Left ventricle myocardium inferior (tissue), 1 donor: ENCODE measurements at regions of chr19 and their contacts with region 1.

Region 1: GRCh38 chr19:2475702-2476450 is at the start of gene GADD45B:
- DNase-seq: peak; percentile 98
- H3K4me3 ChIP-seq: peak within 1 kb of the TSS; percentile 98
- H3K27ac ChIP-seq: peak within 1 kb of the TSS; percentile 95
- H3K4me1 ChIP-seq: peaks cover 51% of the 10 kb centered on the region
- H3K27me3 ChIP-seq: no peaks in the 10 kb centered on the region
- CTCF ChIP-seq: no peak
- total RNA-seq, gene GADD45B: 34.3 TPM

Region 2: DNA sequence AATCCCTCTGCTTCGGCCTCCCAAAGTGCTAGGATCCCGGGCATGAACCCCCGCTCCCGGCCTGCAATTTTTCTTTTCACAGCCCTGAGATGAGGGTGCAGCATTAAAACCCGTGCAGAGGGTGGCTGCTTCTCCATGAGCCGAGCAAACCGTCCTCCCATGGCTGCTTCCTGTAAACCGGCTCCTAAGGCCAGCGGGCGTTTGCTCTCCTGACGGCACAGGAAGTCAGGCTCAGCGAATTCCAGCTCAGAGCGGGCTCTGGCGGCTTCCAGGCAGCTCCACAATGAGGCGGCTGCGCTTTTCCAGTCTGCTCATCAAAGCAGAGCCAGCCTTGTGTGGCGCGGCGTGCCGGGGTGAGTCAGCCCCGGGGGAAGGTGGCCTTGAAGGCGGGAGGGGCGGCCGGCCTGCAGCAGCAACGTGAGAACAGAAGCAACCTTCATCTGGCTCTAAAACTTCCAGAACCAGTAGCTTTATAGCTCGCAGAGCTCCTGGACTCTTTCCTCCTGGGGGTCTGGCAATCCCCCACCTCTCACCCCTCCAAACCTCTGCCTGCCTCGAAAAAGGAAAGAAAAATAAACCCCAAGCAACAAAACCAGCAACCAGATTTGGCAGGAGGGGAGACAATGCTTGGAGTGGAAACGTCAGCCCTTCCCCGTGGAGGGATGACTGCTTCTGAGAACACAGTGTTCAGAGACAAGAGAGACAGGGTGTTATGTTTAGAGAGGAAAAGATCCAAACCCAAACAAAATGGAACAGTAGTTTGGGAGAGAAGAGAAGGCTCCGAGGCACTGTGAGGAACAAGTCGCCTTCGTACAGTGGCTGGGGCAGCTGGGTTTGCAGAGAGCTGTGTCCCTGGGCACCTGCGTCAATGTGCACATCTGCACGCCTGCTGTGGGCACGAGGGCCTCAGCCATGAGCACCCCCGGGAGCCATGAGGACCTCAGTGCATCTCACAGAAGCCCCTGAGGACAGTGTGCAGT is 67.9 kb after region 1 on chr19:
- intact Hi-C with region 1: loop called (anchors 5 kb)
- DNase-seq: peak; percentile 94
- H3K4me3 ChIP-seq: peak overlapping the region; percentile 54
- H3K27ac ChIP-seq: peak overlapping the region; percentile 96
- H3K4me1 ChIP-seq: peaks cover 81% of the 10 kb centered on the region
- H3K27me3 ChIP-seq: no peaks in the 10 kb centered on the region
- CTCF ChIP-seq: peak; percentile 43

Region 3: GRCh38 chr19:2588081-2588777 is 112.4 kb after region 1 on chr19:
- intact Hi-C with region 1: loop called (anchors 10 kb)
- DNase-seq: peak; percentile 66
- H3K4me3 ChIP-seq: peak overlapping the region; percentile 38
- H3K27ac ChIP-seq: peak overlapping the region; percentile 79
- H3K4me1 ChIP-seq: peaks cover 21% of the 10 kb centered on the region
- H3K27me3 ChIP-seq: no peaks in the 10 kb centered on the region
- CTCF ChIP-seq: no peak

Region 4: DNA sequence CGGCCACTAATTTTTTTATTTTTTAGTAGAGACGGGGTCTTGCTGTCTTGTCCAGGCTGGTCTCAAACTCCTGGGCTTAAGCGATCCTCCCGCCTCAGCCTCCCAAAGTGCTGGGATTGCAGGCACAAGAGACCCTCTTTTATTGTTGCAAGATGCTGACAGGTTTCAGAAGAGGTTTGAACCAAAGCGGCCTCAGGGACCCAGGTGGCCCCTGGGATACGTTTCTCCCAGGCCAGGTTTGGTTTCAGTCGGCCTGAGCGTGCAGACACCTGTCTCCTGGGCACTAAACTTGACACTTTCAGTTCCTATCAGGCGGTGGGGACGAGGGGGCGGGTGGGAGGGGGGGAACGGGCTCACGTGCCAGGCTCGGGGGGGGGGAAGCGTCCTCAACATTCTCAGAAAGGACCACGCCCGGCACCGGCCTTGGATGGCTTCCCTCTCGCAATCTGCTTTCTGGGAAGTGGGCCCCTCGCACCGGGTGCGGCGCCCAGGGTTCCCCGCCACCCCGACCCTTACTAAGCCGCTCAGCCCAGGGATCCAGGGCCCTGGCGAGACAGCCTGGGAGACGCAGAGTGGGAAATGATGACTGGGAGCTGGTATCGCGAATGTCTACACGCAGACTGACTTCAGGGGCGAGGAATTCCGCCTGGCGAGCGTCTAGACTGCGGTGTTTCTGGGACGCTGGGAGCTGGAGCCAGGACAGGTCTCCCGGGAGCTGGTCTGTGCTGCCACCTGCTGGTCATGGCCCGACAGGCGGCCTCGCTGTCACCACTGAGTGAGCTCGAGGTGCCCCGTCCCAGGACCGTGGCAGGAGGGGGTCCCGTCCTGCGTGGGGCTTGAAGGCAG is 135.0 kb after region 1 on chr19:
- intact Hi-C with region 1: loop called (anchors 5 kb)
- DNase-seq: peak; percentile 94
- H3K4me3 ChIP-seq: peak overlapping the region; percentile 65
- H3K27ac ChIP-seq: peak overlapping the region; percentile 87
- H3K4me1 ChIP-seq: peaks cover 26% of the 10 kb centered on the region
- H3K27me3 ChIP-seq: peaks cover 7% of the 10 kb centered on the region
- CTCF ChIP-seq: peak; percentile 99